Sciatic nerve (tissue), 2 donors: ENCODE measurements at regions of chr12 and their contacts with region 1.

Region 1: DNA sequence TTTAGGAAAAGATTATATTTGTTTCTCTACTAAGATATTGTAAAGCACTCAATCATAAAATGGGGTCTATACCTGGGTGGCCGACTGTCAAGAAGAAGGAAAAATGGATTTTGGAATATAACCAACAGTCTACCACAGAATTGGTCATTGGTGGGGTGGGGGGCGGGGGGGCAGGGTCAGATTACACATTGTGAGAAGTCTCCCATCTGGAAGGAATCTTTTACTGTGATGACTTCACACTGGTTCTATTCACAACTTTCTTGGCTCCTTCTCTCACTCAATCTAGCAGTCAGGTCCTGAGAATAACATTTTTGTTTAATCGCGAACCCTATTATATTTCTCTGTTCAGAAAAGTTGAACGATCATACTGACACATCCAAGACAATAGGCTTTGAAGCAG is 8.7 kb upstream of the CLEC4E start:
- DNase-seq: no peak
- ATAC-seq: peak; percentile 42

Region 2: GRCh38 chr12:8609061-8609570 is 59.7 kb after region 1 on chr12:
- intact Hi-C with region 1: loop called (anchors 5 kb)
- DNase-seq: no peak
- ATAC-seq: peak; percentile 55

Region 3: DNA sequence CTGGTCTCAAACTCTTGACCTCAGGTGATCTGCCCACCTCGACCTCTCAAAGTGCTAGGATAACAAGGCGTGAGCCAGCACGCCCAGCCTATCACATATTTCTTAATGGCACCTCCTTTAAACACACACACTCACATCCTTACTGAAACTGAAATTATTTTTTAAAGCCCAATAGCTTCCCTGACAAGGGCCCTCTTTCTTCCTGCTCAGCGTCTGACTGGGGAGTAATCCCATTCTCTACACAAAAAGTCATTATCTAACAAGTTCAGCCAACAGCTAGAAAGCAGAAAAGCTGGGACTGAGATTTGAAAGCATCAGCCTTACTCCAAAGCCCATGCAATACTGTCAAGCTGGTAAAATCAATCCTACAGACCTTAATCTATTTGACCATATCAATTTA is 73.3 kb after region 1 on chr12:
- intact Hi-C with region 1: no loop called
- DNase-seq: no peak
- ATAC-seq: no peak